Sigmoid colon (tissue), 7 donors: ENCODE measurements at regions of chr15 and their contacts with region 1.

Region 1: DNA sequence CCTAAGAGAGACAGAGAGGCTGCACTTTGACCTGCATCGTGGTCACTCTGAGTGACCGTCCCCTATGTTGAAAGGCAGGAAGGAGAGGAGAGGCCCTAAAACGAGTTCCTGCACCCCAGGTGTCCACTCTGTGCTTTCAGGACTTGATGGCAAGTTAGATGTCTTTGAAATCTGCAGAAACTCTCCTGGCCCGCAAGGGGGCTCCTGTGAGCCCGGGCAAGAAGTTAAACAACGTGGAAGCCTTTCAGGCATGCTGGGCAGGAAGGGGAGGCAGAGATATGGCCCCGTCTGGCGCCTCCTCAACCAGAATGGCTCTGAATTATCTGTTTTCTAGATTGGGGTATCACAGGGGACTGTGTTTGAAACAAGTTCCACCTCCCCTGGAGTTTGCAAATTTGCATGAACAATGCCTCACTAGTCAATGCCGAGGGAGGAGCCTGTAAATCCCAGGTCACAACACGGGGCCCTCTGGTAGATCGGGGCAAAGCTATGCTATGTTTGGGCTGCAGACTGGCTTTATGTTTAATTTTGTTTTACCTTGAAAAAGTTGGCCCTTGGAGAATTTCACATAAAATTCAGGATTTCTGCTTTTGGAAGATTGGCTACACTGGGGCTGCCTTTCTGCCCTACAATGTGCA is 9.8 kb downstream of the CTXND1 start:
- DNase-seq: no peak
- H3K4me3 ChIP-seq: no peak overlapping the region
- H3K27ac ChIP-seq: no peak overlapping the region
- H3K4me1 ChIP-seq: no peaks in the 10 kb centered on the region
- H3K27me3 ChIP-seq: peaks cover 0 to 28% (median 0%) of the 10 kb centered on the region in 3 donors
- CTCF ChIP-seq: no peak
- EP300 ChIP-seq: no peak
- POLR2A ChIP-seq: no peak

Region 2: DNA sequence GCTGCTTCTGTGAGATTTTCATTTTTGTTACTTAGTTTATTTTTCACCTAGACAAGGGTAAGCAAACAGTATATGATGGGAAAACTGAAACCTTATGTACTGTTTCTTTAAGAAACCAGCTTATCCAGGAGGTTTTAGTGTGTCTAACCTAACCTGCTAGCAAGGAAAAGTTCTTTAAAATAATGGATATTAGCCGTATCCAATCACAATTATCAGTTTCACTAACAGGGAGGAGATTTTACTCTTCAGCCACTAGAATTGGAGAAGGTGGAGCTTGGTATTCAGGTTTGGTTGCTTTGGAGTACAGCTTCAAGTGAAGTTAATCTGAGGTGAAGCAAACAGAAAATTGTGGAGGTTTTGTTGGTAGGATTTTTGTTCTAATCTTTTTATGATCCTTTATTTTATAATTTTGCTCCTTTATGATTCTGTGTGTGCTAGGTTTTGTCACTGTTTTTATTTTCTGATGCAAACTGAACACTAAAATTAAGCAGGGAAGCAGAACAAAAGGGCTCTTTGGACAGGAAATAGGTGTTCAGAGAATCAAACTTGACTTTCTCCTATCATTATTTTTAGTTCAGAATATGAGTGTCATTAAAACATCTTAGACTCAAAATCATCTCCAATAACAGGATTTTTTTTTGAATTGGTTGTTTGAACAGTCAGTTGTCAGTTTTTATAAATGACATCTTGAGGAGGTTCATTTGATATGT is 169.8 kb before region 1 on chr15:
- intact Hi-C with region 1: loop called (anchors 10 kb)
- DNase-seq: no peak
- H3K4me3 ChIP-seq: peak overlapping the region in 3 of 4 donors; percentile 30 to 42 (median 38)
- H3K27ac ChIP-seq: peak overlapping the region in 3 of 4 donors; percentile 33 to 54 (median 48)
- H3K4me1 ChIP-seq: peaks cover 0 to 73% (median 50%) of the 10 kb centered on the region in 4 donors
- H3K27me3 ChIP-seq: no peaks in the 10 kb centered on the region
- CTCF ChIP-seq: no peak
- EP300 ChIP-seq: no peak
- POLR2A ChIP-seq: no peak

Region 3: GRCh38 chr15:80343554-80343992 is 101.3 kb after region 1 on chr15:
- intact Hi-C with region 1: no loop called
- DNase-seq: no peak
- H3K4me3 ChIP-seq: no peak overlapping the region
- H3K27ac ChIP-seq: no peak overlapping the region
- H3K4me1 ChIP-seq: peaks cover 0 to 4% (median 0%) of the 10 kb centered on the region in 4 donors
- H3K27me3 ChIP-seq: no peaks in the 10 kb centered on the region
- CTCF ChIP-seq: no peak
- EP300 ChIP-seq: peak in 1 of 4 donors; percentile 40
- POLR2A ChIP-seq: no peak

Region 4: GRCh38 chr15:80695104-80695910 is 453.1 kb after region 1 on chr15 and contains the start of gene ABHD17C:
- intact Hi-C with region 1: no loop called
- DNase-seq: peak; percentile 72
- H3K4me3 ChIP-seq: peak within 1 kb of the TSS; percentile 63 to 83 (median 74)
- H3K27ac ChIP-seq: peak within 1 kb of the TSS; percentile 86 to 91 (median 88)
- H3K4me1 ChIP-seq: peaks cover 0 to 28% (median 25%) of the 10 kb centered on the region in 4 donors
- H3K27me3 ChIP-seq: no peaks in the 10 kb centered on the region
- CTCF ChIP-seq: no peak
- EP300 ChIP-seq: no peak
- POLR2A ChIP-seq: no peak
- total RNA-seq, gene ABHD17C: 2.0 to 4.2 (median 2.6) TPM